Right ventricle myocardium superior (tissue), 1 donor: ENCODE measurements at regions of chr2 and their contacts with region 1.

Region 1: GRCh38 chr2:157784169-157784822 is 91.8 kb downstream of the ACVR1 start:
- DNase-seq: peak; percentile 63
- ATAC-seq: peak; percentile 73

Region 2: DNA sequence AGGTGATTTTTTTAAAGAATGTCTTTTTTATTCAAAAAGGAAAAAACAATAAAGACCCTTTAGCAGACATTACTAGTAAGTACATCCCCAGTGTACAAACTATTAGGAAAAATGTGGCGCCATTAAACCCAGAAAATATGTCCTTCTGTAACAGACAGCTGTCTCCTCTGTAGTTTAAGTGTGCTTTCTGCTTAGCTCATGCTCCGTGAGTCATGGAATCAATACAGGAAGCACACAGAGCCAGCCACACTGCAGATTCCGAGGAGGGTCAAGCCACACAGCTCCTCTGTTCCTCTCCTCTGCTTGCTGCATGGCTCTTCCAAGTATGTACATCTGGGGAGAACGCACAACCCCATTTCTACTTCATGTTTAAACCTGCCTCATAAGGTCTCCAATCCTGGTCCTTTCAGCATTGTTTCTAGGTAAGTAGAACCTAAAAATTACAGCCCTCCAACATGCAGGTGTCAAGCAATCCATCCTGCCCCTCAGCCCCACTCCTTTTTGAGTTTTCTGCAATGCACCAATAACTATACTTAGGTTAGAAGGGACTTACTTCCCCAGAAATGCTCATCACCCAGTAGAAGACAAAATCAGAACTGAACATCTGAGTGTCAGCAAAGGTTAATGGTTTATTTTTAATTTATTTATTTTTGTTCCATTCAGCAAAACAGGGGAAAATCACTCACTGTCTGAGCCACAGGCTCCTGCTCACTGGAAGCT is 54.3 kb after region 1 on chr2:
- intact Hi-C with region 1: loop called (anchors 10 kb)
- DNase-seq: peak; percentile 48
- ATAC-seq: peak; percentile 72

Region 3: DNA sequence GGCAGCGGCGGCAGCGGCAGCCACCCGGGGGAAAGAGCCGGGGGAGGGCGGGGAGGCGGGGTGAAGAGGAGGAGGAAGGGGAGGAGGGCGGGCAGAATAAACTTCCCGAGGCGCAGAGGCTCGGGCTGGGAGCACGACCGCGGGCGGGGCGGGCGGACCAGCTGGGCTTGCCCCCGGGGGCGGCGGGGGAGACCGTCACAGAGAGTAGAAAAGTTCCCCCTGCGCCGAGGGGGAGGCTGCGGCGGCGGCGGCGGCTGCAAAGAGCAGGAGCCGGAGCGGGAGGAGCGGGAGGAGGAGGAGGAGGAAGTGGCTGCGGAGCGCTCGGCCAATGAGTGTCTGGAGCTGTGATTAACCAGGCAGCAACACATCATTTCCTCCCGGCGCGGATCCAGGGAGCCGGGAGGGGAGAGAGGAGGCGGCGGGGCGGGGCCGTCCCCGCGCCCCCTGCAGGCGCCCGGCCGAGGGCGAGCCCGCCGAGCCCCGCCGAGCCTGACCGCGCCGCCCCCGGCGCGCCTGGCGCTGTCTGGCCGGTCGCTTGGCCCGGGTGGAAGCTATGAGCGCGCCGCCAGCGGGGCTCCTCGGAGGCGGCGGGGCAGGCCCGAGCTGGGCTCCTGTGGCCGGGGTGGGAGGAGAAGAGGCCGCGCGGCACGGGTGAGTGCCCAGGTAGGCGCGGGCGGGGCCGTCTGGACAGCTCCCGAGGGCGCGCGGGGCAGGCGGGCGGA is 91.9 kb after region 1 on chr2 and contains the start of gene ACVR1:
- intact Hi-C with region 1: loop called (anchors 5 kb)
- DNase-seq: peak; percentile 98
- ATAC-seq: peak; percentile 96
- total RNA-seq, gene ACVR1: 28.9 TPM